ENCODE measurements at regions of chr1 and their contacts with region 1.

Region 1: GRCh38 chr1:1906185-1907097 is 8.6 kb upstream of the CALML6 start:
- DNase-seq: peak; percentile 93
- H3K4me3 ChIP-seq: peak overlapping the region in 1 of 2 experiments; percentile 50; a peak in 1 of 4 replicates
- H3K27ac ChIP-seq: peak overlapping the region; percentile 27 to 36; a peak in 2 of 4 replicates
- H3K4me1 ChIP-seq: peaks cover 0 to 20% of the 10 kb centered on the region in 2 experiments; a peak in 2 of 4 replicates
- H3K27me3 ChIP-seq: no peaks in the 10 kb centered on the region
- CTCF ChIP-seq: peak; percentile 79
- EP300 ChIP-seq: no peak
- RAD21 ChIP-seq: peak; percentile 99

Region 2: GRCh38 chr1:1777950-1778662 is 128.3 kb before region 1 on chr1 and contains the start of gene NADK:
- CTCF ChIA-PET with region 1: interaction called, 54 read pairs
- POLR2A ChIA-PET with region 1: no interaction called
- DNase-seq: peak; percentile 98
- H3K4me3 ChIP-seq: peak within 1 kb of the TSS; percentile 71 to 80
- H3K27ac ChIP-seq: peak within 1 kb of the TSS; percentile 59 to 67; a peak in 3 of 4 replicates
- H3K4me1 ChIP-seq: peaks cover 4 to 38% of the 10 kb centered on the region in 2 experiments; a peak in 2 of 4 replicates
- H3K27me3 ChIP-seq: no peaks in the 10 kb centered on the region
- CTCF ChIP-seq: no peak
- EP300 ChIP-seq: no peak
- RAD21 ChIP-seq: no peak
- polyA plus RNA-seq, gene NADK: 66.2 and 70.4 TPM in 2 replicates

Region 3: DNA sequence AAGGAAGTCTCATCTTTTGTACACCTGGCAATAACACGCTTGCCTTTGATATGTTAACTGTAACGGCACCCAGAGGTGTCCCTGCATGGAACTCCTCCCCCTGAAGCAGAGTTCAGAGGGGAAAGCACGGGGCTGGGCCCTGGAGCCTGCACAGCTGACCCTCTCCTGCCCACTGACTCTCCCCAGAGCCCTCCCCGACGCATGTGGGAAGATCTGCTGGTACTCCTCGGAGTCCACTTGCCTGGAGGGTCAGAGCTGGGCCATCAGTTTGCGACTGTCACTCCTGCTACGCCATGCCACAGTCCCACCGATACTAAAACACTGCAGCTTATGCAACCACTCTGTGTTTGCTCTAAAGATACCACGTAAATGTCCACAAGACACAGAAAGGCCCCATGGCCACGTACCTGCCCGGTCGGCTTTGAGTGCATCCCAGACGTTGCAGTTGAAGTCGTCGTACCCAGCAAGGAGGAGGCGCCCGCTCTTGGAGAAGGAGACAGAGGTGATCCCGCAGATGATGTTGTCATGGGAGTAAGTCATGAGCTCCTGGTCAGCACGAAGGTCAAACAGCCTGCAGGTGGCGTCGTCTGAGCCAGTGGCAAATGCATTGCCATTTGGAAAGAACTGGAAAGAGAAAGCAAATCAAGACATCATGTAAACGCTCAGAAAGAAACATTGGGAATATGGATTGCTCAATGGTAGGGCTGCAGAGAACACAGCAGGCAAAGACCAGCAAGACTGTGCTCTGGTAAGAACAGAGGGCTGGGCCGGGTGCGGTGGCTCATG is 117.6 kb before region 1 on chr1:
- CTCF ChIA-PET with region 1: interaction called, 25 read pairs
- POLR2A ChIA-PET with region 1: no interaction called
- DNase-seq: peak; percentile 53
- H3K4me3 ChIP-seq: no peak overlapping the region
- H3K27ac ChIP-seq: peak overlapping the region in 1 of 2 experiments; percentile 11; a peak in 1 of 4 replicates
- H3K4me1 ChIP-seq: no peaks in the 10 kb centered on the region; a peak in 1 of 4 replicates
- H3K27me3 ChIP-seq: no peaks in the 10 kb centered on the region
- CTCF ChIP-seq: peak; percentile 49
- EP300 ChIP-seq: no peak
- RAD21 ChIP-seq: peak; percentile 44

Region 4: DNA sequence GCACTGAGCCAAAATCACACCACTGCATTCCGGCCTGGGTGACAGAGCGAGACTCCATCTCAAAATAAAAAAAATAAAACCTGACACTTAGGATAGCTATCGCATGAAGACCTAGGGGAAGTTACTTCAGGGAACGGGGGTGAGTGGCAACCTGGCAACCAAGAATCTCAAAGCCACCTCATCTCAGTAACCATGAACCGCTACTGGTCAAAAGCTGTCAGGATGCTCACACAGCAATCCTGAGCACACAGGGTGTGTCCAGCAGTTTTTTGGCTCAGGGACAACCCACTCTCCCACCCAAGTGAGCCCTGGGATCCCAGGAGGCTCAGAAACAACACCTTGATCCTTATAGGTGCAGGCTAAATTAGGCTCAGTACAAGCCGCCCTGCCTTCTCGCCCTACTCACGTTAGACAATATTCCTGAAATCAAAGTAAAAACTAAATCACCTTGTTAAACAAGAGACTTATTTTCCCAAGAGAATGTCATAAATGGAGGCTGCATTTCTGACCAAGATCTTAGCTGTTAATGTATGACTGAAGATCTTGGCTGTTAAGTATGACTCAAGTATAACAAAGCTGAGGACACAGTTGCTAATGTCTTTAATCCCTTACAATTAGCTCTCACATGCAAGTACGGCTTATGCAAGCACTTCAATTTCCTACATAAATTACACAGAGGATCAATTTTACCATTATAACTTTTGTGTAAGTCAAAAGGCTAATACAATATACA is 79.9 kb before region 1 on chr1:
- CTCF ChIA-PET with region 1: interaction called, 12 read pairs
- POLR2A ChIA-PET with region 1: no interaction called
- DNase-seq: no peak
- H3K4me3 ChIP-seq: no peak overlapping the region
- H3K27ac ChIP-seq: no peak overlapping the region
- H3K4me1 ChIP-seq: peaks cover 4 to 15% of the 10 kb centered on the region in 2 experiments; a peak in 2 of 4 replicates
- H3K27me3 ChIP-seq: no peaks in the 10 kb centered on the region
- CTCF ChIP-seq: no peak
- EP300 ChIP-seq: no peak
- RAD21 ChIP-seq: no peak

Region 5: GRCh38 chr1:1858382-1859086 is 47.9 kb before region 1 on chr1:
- CTCF ChIA-PET with region 1: interaction called, 12 read pairs
- POLR2A ChIA-PET with region 1: interaction called, 3 read pairs
- DNase-seq: peak; percentile 89
- H3K4me3 ChIP-seq: peak overlapping the region; percentile 17 to 39; a peak in 2 of 4 replicates
- H3K27ac ChIP-seq: peak overlapping the region; percentile 86 to 89
- H3K4me1 ChIP-seq: peaks cover 9 to 51% of the 10 kb centered on the region in 2 experiments; a peak in 3 of 4 replicates
- H3K27me3 ChIP-seq: no peaks in the 10 kb centered on the region
- CTCF ChIP-seq: peak; percentile 52
- EP300 ChIP-seq: peak in 1 of 2 experiments; percentile 79; a peak in 2 of 4 replicates
- RAD21 ChIP-seq: peak; percentile 52

Region 6: GRCh38 chr1:1883092-1883873 is 23.2 kb before region 1 on chr1:
- CTCF ChIA-PET with region 1: interaction called, 15 read pairs
- POLR2A ChIA-PET with region 1: interaction called, 12 read pairs
- DNase-seq: peak; percentile 58
- H3K4me3 ChIP-seq: no peak overlapping the region
- H3K27ac ChIP-seq: peak overlapping the region; percentile 31 to 35
- H3K4me1 ChIP-seq: peaks cover 0 to 21% of the 10 kb centered on the region in 2 experiments; a peak in 2 of 4 replicates
- H3K27me3 ChIP-seq: no peaks in the 10 kb centered on the region
- CTCF ChIP-seq: no peak
- EP300 ChIP-seq: peak in 1 of 2 experiments; percentile 56; a peak in 1 of 4 replicates
- RAD21 ChIP-seq: no peak